Activated CD4-positive, alpha-beta T cell treated with anti-CD3 and anti-CD28 coated beads, Interleukin-2, amount 10 ng/mL, durations not matched to agents 7 days and 5 days (primary cell): ENCODE measurements at regions of chr11 and their contacts with region 1.

Region 1: DNA sequence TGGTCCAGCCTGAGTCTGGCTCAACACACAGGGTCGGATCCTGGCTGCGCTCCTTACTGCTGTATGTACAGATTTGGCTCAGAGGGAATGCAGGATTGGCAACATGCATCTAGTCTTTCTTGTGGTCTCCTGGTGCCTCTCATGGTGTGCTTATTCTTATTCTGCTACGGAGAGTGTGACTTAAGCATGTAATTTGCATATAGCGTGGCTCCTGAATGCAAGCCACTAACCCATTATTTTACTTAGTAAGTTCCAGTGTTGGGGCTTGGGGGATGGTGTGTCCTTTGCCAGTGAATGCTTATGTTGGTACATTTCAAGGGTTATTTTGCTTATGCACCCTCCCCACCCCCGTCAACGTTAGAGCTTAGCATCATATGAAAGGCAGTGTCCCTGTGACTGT is 51.2 kb downstream of the PTPRJ start:
- DNase-seq: no peak
- H3K4me3 Mint-ChIP-seq: no peak overlapping the region
- H3K27ac Mint-ChIP-seq: no peak overlapping the region
- H3K4me1 Mint-ChIP-seq: peaks cover 83% of the 10 kb centered on the region
- H3K27me3 Mint-ChIP-seq: no peaks in the 10 kb centered on the region

Region 2: DNA sequence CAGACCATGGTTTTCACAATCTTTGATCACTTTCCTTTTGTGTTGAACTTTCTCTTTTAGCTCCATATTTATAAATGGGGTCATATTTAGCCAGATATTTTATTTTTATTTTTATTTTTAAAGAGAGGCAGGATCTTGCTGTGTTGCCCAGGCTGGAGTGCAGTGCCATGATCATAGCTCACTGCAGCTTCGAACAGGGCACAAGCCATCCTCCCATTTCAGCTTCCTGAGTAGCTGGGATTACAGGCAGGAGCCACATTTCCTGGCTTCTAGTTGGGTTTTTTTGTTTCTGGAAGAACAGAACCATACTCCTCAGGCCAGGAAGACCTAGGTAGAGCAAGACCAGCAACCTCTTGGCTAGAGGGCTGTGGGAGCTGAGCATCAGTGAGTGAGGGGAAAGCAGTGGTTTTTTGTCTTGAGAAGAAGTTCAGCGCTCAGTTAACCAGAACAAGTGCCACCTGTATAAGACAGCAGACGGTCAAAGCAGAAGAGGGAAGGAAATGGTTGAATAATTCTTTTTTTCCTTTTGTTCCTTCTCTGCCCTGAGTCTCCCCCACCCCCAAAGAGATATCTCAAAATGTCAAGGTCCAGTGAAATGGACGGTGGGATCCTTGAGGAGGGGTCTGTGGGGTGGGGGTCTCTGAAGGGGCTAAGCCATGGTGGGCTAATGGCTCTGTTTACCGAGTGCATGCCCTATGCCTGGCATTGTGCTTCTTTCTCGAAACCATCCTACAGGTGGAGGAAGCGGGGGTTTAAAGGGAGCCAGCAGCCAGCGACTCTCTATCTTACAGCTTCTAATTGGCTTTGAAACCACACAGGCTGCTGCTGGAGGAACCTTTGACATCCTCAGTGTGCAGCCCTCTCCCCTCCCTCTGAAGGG is 11.7 kb after region 1 on chr11:
- CTCF ChIA-PET with region 1: interaction called, 11 read pairs
- POLR2A ChIA-PET with region 1: no interaction called
- DNase-seq: peak; percentile 59
- H3K4me3 Mint-ChIP-seq: peak overlapping the region; percentile 23
- H3K27ac Mint-ChIP-seq: peak overlapping the region; percentile 79
- H3K4me1 Mint-ChIP-seq: peaks cover 75% of the 10 kb centered on the region
- H3K27me3 Mint-ChIP-seq: no peaks in the 10 kb centered on the region

Region 3: DNA sequence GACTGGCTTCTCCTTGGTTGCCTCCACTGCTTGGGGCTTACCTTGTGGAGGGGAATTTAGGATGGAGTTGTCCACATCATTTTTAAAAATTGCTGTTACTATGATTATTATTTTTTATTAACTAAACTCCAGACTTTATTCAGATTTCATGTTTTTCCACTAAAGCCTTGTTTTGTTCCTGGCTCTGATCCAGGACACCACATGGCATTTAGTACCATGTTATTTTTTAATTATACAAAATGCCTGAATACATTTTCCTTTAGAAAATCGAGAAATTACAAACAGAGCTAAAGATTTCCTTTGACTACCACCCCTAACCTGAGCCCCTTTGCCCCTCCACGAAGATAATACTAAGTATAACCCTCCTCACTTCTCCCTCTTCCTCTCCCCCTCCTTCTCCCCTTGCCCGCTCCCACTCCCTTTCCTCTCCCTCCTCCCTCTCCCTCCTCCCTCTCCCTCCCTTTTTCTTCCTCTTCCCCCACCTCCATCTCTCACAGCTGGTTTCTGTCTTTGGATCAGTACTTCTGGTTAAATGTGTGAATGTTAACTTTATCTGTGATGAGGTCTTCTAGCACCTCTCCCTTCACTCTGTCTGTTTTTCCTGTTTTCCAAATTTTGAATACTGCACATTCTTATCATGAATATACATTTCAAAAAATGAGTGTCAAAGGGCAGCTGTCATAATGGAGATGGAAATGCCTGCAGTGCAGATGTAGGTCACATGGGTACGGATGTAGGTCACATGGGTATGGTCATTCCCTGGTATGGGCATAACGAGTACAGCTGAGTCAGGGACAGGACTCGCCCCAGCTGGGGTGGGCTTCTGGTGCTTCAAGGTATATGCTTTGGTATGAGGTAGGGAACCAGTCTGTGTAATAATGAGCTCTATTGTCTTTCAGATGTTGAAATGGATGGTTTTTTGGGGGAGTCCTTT is 130.6 kb after region 1 on chr11:
- CTCF ChIA-PET with region 1: no interaction called
- POLR2A ChIA-PET with region 1: no interaction called
- DNase-seq: no peak
- H3K4me3 Mint-ChIP-seq: no peak overlapping the region
- H3K27ac Mint-ChIP-seq: no peak overlapping the region
- H3K4me1 Mint-ChIP-seq: no peaks in the 10 kb centered on the region
- H3K27me3 Mint-ChIP-seq: no peaks in the 10 kb centered on the region